BJ (cell line): ENCODE measurements at regions of chr9 and their contacts with region 1.

Region 1: GRCh38 chr9:123349691-123350480 is 6.1 kb upstream of the CRB2 start:
- DNase-seq: no peak
- H3K4me3 ChIP-seq: no peak overlapping the region
- H3K27me3 ChIP-seq: peaks cover 24% of the 10 kb centered on the region
- CTCF ChIP-seq: peak; percentile 97

Region 2: DNA sequence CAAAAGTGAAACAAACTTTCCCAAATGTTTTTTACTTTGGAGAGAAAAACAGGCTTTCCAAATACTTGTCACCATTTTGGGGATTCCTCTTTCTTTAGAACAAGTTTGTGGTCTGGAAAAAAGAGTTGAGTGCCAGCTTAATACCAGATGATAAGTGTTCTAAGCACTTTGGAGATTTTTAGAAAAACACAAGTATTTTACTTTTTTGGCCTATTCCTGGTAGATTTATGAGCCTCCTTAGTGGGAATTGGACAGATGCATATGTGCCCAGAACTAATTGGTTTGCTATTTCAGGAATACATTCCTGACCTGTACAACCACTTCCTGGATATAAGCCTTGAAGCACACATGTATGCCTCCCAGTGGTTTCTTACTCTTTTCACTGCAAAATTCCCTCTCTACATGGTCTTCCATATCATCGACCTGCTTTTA is 275.9 kb before region 1 on chr9:
- CTCF ChIA-PET with region 1: interaction called, 27 read pairs
- POLR2A ChIA-PET with region 1: no interaction called
- DNase-seq: peak; percentile 84
- H3K4me3 ChIP-seq: no peak overlapping the region
- H3K27me3 ChIP-seq: no peaks in the 10 kb centered on the region
- CTCF ChIP-seq: peak; percentile 24; the same call in 1 of the 2 replicates

Region 3: DNA sequence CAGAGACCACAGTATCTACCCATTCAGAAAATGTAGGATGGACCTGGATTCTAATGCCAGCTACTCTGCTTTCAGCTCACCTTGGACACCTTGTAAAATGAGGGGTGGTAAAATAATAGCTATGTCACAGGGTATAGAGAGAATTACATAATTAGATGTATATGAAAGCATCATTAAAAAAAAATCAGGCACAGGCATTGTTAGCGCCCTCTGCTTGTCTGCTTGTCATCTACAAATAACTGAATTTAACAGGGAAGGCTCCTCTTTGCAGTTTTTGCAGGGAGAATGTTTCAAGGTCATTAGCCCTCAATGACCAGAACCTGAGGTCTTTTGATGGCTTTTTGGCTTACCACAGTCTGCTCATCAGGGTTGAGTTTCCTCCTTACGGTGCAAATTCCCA is 258.4 kb before region 1 on chr9:
- CTCF ChIA-PET with region 1: interaction called, 25 read pairs
- POLR2A ChIA-PET with region 1: no interaction called
- DNase-seq: no peak
- H3K4me3 ChIP-seq: no peak overlapping the region
- H3K27me3 ChIP-seq: no peaks in the 10 kb centered on the region
- CTCF ChIP-seq: no peak

Region 4: GRCh38 chr9:123326662-123327093 is 23.2 kb before region 1 on chr9:
- CTCF ChIA-PET with region 1: interaction called, 19 read pairs
- POLR2A ChIA-PET with region 1: no interaction called
- DNase-seq: no peak
- H3K4me3 ChIP-seq: no peak overlapping the region
- H3K27me3 ChIP-seq: peaks cover 9% of the 10 kb centered on the region
- CTCF ChIP-seq: no peak

Region 5: DNA sequence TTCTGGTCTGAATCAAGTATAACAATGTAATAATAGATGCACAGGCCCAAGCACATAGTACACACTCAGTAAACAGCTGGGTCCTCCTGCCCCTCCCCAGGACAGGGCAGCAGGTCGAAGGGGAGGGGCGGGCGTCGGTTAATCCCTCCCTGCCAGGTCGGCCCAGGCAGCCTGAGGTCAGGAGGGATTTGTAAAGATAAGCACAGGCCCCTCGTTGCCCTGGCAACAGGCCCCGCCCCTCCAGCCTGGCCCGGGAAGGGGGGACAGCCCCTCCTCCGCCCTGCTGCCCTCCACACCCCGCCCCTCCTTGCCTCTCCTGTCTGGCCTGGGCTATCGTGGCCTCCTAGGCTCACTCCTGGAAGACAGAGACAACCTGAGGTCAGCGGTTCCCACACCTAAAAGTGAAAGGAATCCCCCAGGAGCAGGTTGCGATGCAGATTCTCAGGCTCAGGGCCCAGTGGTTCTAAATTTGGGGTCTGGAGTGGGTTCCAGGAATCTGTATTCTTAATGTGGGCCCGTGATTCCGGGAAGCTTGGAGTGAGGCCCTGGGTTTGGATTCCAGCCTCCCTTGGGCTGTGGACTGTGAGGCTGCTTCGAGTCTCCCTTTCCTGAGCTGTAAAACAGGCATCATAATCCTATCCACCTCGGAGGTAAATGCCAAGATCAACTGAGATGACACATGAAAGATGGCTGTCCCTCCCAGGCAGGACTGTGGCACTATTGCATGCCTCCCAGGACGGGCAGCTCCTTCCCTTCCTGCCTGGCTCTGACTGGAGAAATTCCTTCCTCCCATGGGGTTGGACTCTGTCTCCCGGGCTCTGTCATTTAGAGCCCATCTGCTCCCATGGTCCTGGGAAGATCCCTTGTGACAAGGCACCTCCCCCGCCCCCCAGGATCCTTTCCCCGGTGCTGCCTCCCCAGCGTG is 10.5 kb after region 1 on chr9:
- CTCF ChIA-PET with region 1: interaction called, 22 read pairs
- POLR2A ChIA-PET with region 1: no interaction called
- DNase-seq: no peak
- H3K4me3 ChIP-seq: no peak overlapping the region
- H3K27me3 ChIP-seq: peaks cover 12% of the 10 kb centered on the region
- CTCF ChIP-seq: no peak

Region 6: DNA sequence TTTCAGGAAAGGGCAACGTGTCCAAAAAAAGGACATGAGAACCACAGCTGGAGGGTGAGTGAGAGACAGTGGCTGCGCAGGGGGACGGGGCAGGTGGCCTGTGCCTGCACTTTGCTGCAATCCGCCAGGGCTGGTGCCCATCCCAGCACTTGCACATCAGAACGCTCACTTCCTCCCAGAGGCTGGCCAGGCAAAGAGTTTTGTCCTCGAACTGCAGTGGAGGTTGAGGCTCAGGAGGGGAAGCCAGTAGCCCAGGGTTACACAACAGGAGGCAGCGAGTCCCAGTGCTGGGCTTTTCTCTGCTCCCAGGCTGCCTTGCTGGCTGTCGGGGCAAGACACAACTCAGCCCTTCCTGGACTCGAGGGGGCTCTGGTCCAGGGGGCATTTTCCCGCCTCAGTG is 39.2 kb after region 1 on chr9:
- CTCF ChIA-PET with region 1: interaction called, 58 read pairs
- POLR2A ChIA-PET with region 1: no interaction called
- DNase-seq: no peak
- H3K4me3 ChIP-seq: no peak overlapping the region
- H3K27me3 ChIP-seq: no peaks in the 10 kb centered on the region
- CTCF ChIP-seq: no peak

Region 7: DNA sequence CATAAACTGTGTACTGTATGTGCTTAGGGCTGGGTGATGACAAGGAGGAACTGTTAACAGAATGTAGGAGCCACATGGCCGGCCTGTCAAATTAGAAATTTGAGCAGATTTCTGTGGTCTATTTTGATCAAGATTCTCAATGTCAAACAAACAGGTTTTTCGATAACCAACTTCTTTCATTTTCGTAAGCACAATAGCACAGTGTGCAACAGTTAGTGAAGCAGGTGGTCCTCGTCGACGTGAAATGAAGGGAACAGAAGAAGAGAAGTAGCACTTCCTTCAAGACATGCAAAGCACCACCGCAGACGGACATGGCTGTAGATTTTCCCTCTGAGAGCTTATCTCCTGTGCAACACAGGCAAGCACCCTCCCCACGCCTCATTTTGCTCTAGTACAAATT is 258.2 kb after region 1 on chr9:
- CTCF ChIA-PET with region 1: no interaction called
- POLR2A ChIA-PET with region 1: no interaction called
- DNase-seq: no peak
- H3K4me3 ChIP-seq: no peak overlapping the region
- H3K27me3 ChIP-seq: no peaks in the 10 kb centered on the region
- CTCF ChIP-seq: no peak